Right lobe of liver (tissue), 6 donors: ENCODE measurements at regions of chr5 and their contacts with region 1.

Region 1: DNA sequence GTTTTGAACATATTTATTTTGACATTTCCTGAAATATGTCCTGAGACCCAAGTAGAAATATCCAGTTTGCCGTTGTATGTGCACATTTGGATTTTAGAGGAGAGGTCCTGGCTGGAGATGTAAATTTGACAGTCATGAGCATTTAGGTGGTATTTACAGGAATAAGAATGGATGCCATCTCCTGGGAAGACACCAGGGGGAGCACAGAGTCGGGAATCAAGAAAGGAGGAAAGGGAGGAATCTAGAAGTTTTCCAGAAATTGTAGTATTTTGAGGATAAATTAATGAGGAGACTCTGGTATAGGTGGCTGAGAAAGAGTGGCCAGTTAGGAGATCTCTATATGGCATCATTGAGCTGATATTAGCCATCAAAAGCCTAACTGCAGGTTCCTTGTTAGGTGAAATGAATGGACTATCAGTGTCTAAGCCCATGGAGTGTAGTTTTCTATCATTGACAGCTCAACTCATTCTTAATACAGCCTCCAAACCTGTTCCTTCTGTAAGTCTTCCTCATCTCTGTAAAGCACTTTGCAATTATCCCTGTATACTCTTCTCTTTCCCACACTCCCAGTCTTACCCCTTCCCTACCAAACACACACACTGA is 7.2 kb downstream of the GAPT start:
- DNase-seq: no peak
- ATAC-seq: peak; percentile 68 to 78 (median 75)
- H3K4me3 ChIP-seq: no peak overlapping the region
- H3K27ac ChIP-seq: no peak overlapping the region
- H3K4me1 ChIP-seq: no peaks in the 10 kb centered on the region
- H3K27me3 ChIP-seq: no peaks in the 10 kb centered on the region
- CTCF ChIP-seq: peak; percentile 74 to 92 (median 78)
- POLR2A ChIP-seq: no peak

Region 2: DNA sequence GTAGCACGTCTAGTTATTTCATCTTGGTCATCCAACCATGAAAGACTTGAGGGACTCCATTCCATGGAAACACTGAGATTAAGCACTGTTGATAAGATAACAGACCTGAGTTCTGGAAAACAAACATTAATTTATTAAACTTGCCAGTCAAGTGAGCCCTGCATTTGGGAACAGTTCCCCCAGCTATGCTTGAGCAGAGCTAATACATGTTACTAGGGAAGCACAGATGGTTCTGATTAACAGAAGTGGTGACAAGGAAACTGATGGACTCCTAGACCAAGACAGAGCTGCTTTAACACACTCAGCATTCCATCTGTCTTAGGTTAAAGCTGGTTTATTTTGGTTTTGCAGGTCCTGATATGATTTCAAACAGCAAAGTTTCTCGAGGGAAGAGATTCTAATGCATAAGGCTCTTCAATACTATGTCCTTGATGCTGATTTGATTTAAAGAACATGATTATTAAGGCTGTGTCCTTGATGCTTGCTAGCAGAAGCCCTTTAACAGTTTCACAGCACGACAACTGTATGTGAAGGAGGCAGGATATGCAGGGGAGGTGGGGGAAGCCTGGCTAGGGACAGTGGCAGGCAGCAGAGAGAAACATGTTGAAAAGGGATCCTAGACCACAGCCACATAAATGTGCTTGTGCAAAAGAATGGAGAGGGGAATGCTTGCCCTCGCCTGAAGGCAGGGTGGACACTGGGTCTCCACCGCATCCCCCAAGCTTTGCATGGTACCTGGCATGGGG is 1082.0 kb before region 1 on chr5:
- intact Hi-C with region 1: no loop called
- DNase-seq: no peak
- ATAC-seq: no peak
- H3K4me3 ChIP-seq: no peak overlapping the region
- H3K27ac ChIP-seq: no peak overlapping the region
- H3K4me1 ChIP-seq: peaks cover 0 to 8% (median 3%) of the 10 kb centered on the region in 4 donors
- H3K27me3 ChIP-seq: no peaks in the 10 kb centered on the region
- CTCF ChIP-seq: no peak
- POLR2A ChIP-seq: no peak

Region 3: DNA sequence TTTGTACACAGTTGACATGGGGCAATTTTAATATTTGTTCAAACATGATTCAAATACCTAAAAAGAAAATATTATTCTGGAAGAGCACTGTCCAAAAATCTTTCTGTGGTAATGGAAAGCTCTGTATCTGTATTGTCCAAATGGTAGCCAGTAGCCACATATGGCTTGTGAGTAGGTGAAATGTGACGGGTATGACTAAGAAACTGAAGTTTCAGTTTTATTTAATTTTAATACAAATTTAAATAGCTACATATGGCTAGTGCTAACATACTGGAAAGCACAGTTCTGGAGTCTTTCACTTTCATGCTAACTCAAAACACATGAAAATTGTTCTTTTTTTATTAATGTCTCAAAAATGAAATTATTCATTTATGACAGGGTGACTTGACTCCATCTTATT is 171.2 kb before region 1 on chr5:
- intact Hi-C with region 1: no loop called
- DNase-seq: no peak
- ATAC-seq: no peak
- H3K4me3 ChIP-seq: no peak overlapping the region
- H3K27ac ChIP-seq: no peak overlapping the region
- H3K4me1 ChIP-seq: no peaks in the 10 kb centered on the region
- H3K27me3 ChIP-seq: no peaks in the 10 kb centered on the region
- CTCF ChIP-seq: no peak
- POLR2A ChIP-seq: no peak

Region 4: GRCh38 chr5:58818462-58818861 is 320.0 kb after region 1 on chr5:
- intact Hi-C with region 1: loop called in 1 of 2 experiments (anchors 10 kb)
- DNase-seq: no peak
- ATAC-seq: no peak
- H3K4me3 ChIP-seq: no peak overlapping the region
- H3K27ac ChIP-seq: no peak overlapping the region
- H3K4me1 ChIP-seq: no peaks in the 10 kb centered on the region
- H3K27me3 ChIP-seq: no peaks in the 10 kb centered on the region
- CTCF ChIP-seq: no peak
- POLR2A ChIP-seq: no peak